ENCODE measurements at regions of chr9 and their contacts with region 1.

Region 1: GRCh38 chr9:2603621-2604020 is 18.0 kb upstream of the VLDLR start:
- DNase-seq: no peak
- H3K4me3 Mint-ChIP-seq: no peak overlapping the region
- H3K27ac Mint-ChIP-seq: no peak overlapping the region
- H3K4me1 Mint-ChIP-seq: peaks cover 4% of the 10 kb centered on the region
- H3K27me3 Mint-ChIP-seq: peaks cover 11% of the 10 kb centered on the region
- CTCF ChIP-seq: no peak

Region 2: GRCh38 chr9:2570615-2571479 is 32.8 kb before region 1 on chr9:
- CTCF ChIA-PET with region 1: no interaction called
- POLR2A ChIA-PET with region 1: no interaction called
- intact Hi-C with region 1: loop called (anchors 2 kb)
- DNase-seq: peak; percentile 85
- H3K4me3 Mint-ChIP-seq: no peak overlapping the region
- H3K27ac Mint-ChIP-seq: peak overlapping the region; percentile 31
- H3K4me1 Mint-ChIP-seq: peaks cover 22% of the 10 kb centered on the region
- H3K27me3 Mint-ChIP-seq: no peaks in the 10 kb centered on the region
- CTCF ChIP-seq: no peak